ENCODE measurements at regions of chr1 and their contacts with region 1.

Region 1: GRCh38 chr1:183454390-183454789 is 17.9 kb upstream of the SMG7 start:
- DNase-seq: no peak
- ATAC-seq: no peak
- H3K4me3 ChIP-seq: no peak overlapping the region
- H3K27ac ChIP-seq: no peak overlapping the region
- H3K4me1 ChIP-seq: no peaks in the 10 kb centered on the region
- H3K27me3 ChIP-seq: no peaks in the 10 kb centered on the region; a peak in 1 of 4 replicates
- CTCF ChIP-seq: no peak
- EP300 ChIP-seq: no peak
- POLR2A ChIP-seq: no peak
- RAD21 ChIP-seq: no peak

Region 2: DNA sequence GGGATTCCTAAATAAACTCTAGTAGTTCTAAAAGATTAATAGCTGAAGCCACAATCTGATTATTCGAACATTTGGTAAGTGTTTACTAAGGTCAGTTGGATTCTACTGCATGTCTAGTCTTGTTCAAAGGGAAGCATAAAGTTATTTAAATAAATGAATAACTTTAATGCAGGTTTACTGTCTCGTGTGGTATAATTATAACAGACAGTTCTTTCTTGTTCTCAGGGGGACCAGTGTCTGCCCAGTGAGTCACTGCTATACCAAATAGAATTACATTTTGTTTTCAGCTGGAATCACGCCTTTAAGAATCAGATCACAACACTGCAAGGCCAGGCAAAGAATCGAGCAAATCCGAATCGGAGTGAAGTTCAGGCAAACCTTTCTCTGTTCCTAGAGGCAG is 63.0 kb after region 1 on chr1:
- CTCF ChIA-PET with region 1: no interaction called
- POLR2A ChIA-PET with region 1: interaction called, 10 read pairs
- RAD21 ChIA-PET with region 1: no interaction called
- SMC1A ChIA-PET with region 1: no interaction called
- in situ Hi-C with region 1: no loop called
- intact Hi-C with region 1: no loop called
- DNase-seq: no peak
- ATAC-seq: no peak
- H3K4me3 ChIP-seq: no peak overlapping the region
- H3K27ac ChIP-seq: no peak overlapping the region
- H3K4me1 ChIP-seq: no peaks in the 10 kb centered on the region
- H3K27me3 ChIP-seq: no peaks in the 10 kb centered on the region
- CTCF ChIP-seq: no peak
- EP300 ChIP-seq: no peak
- POLR2A ChIP-seq: no peak
- RAD21 ChIP-seq: no peak